ENCODE measurements at regions of chr1 and their contacts with region 1.

Region 1: DNA sequence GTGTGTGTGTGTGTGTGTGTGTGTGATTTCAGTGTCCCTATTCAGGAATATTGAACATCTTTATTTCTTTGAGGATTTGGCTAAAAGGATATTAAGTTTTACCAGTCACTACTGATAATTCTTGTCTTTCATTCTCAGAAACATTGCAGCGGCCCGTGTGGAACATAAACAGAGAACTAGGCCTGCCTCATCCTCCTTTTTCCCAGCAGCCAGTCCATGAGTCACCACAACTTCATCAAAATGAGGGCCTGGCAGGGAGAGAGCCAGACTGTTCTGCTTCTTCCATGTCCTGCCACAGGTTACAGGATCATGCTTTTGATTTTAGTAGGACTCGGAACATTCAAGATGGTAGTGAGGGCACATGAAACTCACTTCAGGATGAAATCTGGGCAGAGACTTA is 50.7 kb downstream of the LRIG2 start:
- DNase-seq: no peak
- ATAC-seq: no peak
- H3K4me3 ChIP-seq: no peak overlapping the region
- H3K4me3 Mint-ChIP-seq: no peak overlapping the region
- H3K27ac ChIP-seq: no peak overlapping the region
- H3K27ac Mint-ChIP-seq: no peak overlapping the region
- H3K4me1 ChIP-seq: no peaks in the 10 kb centered on the region
- H3K4me1 Mint-ChIP-seq: peaks cover 2 to 6% (median 2%) of the 10 kb centered on the region in 3 donors
- H3K27me3 ChIP-seq: no peaks in the 10 kb centered on the region
- H3K27me3 Mint-ChIP-seq: no peaks in the 10 kb centered on the region

Region 2: DNA sequence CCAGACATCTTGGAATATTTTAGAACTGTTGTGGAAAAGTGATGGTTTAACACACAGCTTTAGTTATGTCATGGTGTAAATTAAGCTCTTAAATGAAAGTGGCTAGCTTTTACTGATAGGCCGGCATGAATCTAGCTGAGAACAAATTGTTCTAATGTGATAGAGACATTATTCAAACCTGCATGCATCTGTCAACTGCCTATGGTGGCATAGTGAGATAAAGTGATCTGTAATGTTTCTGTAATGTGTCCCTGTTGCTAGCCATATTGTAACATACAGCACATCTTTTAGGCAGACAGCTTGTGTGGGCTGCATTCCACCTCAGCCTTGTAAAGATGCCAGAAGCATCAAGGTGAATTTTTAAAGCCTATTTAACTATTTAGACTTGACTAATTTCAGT is 34.8 kb before region 1 on chr1:
- CTCF ChIA-PET with region 1: interaction called in 1 of 2 experiments, 15 read pairs
- POLR2A ChIA-PET with region 1: no interaction called
- DNase-seq: no peak
- ATAC-seq: no peak
- H3K4me3 ChIP-seq: no peak overlapping the region
- H3K4me3 Mint-ChIP-seq: no peak overlapping the region
- H3K27ac ChIP-seq: no peak overlapping the region
- H3K27ac Mint-ChIP-seq: no peak overlapping the region
- H3K4me1 ChIP-seq: no peaks in the 10 kb centered on the region
- H3K4me1 Mint-ChIP-seq: peaks cover 41 to 45% (median 42%) of the 10 kb centered on the region in 3 donors
- H3K27me3 ChIP-seq: no peaks in the 10 kb centered on the region
- H3K27me3 Mint-ChIP-seq: no peaks in the 10 kb centered on the region

Region 3: GRCh38 chr1:113647164-113647563 is 523.4 kb after region 1 on chr1:
- CTCF ChIA-PET with region 1: no interaction called
- POLR2A ChIA-PET with region 1: no interaction called
- DNase-seq: no peak
- ATAC-seq: no peak
- H3K4me3 ChIP-seq: no peak overlapping the region
- H3K4me3 Mint-ChIP-seq: no peak overlapping the region
- H3K27ac ChIP-seq: no peak overlapping the region
- H3K27ac Mint-ChIP-seq: no peak overlapping the region
- H3K4me1 ChIP-seq: no peaks in the 10 kb centered on the region
- H3K4me1 Mint-ChIP-seq: peaks cover 0 to 5% (median 0%) of the 10 kb centered on the region in 3 donors
- H3K27me3 ChIP-seq: no peaks in the 10 kb centered on the region
- H3K27me3 Mint-ChIP-seq: no peaks in the 10 kb centered on the region

Measured in T-cell (primary cell).